CD8-positive, alpha-beta T cell (primary cell): ENCODE measurements at regions of chr5 and their contacts with region 1.

Region 1: GRCh38 chr5:109688971-109689739 is 572 bp upstream of the MAN2A1 start:
- DNase-seq: peak; percentile 50 to 94 (median 74)
- ATAC-seq: peak; percentile 71
- H3K4me3 ChIP-seq: peak overlapping the region; percentile 81 to 93
- H3K4me3 Mint-ChIP-seq: peak overlapping the region; percentile 87
- H3K27ac ChIP-seq: peak overlapping the region; percentile 88 to 93
- H3K27ac Mint-ChIP-seq: peak overlapping the region; percentile 88
- H3K4me1 ChIP-seq: peaks cover 26% of the 10 kb centered on the region
- H3K4me1 Mint-ChIP-seq: peaks cover 32% of the 10 kb centered on the region
- H3K27me3 ChIP-seq: no peaks in the 10 kb centered on the region
- H3K27me3 Mint-ChIP-seq: no peaks in the 10 kb centered on the region
- CTCF ChIP-seq: no peak

Region 2: GRCh38 chr5:108748401-108749127 is 940.6 kb before region 1 on chr5:
- CTCF ChIA-PET with region 1: no interaction called
- POLR2A ChIA-PET with region 1: no interaction called
- intact Hi-C with region 1: loop called in 1 of 2 experiments (anchors 1 kb)
- DNase-seq: peak; percentile 95 to 99 (median 98)
- ATAC-seq: peak; percentile 90
- H3K4me3 ChIP-seq: peak overlapping the region; percentile 86 to 98
- H3K4me3 Mint-ChIP-seq: peak overlapping the region; percentile 87
- H3K27ac ChIP-seq: peak overlapping the region; percentile 82 to 88
- H3K27ac Mint-ChIP-seq: peak overlapping the region; percentile 96
- H3K4me1 ChIP-seq: no peaks in the 10 kb centered on the region
- H3K4me1 Mint-ChIP-seq: peaks cover 12% of the 10 kb centered on the region
- H3K27me3 ChIP-seq: no peaks in the 10 kb centered on the region
- H3K27me3 Mint-ChIP-seq: peaks cover 2% of the 10 kb centered on the region
- CTCF ChIP-seq: no peak

Region 3: GRCh38 chr5:109601736-109602135 is 87.4 kb before region 1 on chr5:
- CTCF ChIA-PET with region 1: no interaction called
- POLR2A ChIA-PET with region 1: no interaction called
- intact Hi-C with region 1: no loop called
- DNase-seq: no peak
- ATAC-seq: no peak
- H3K4me3 ChIP-seq: no peak overlapping the region
- H3K4me3 Mint-ChIP-seq: no peak overlapping the region
- H3K27ac ChIP-seq: no peak overlapping the region
- H3K27ac Mint-ChIP-seq: no peak overlapping the region
- H3K4me1 ChIP-seq: no peaks in the 10 kb centered on the region
- H3K4me1 Mint-ChIP-seq: no peaks in the 10 kb centered on the region
- H3K27me3 ChIP-seq: no peaks in the 10 kb centered on the region
- H3K27me3 Mint-ChIP-seq: peaks cover 12% of the 10 kb centered on the region
- CTCF ChIP-seq: no peak

Region 4: DNA sequence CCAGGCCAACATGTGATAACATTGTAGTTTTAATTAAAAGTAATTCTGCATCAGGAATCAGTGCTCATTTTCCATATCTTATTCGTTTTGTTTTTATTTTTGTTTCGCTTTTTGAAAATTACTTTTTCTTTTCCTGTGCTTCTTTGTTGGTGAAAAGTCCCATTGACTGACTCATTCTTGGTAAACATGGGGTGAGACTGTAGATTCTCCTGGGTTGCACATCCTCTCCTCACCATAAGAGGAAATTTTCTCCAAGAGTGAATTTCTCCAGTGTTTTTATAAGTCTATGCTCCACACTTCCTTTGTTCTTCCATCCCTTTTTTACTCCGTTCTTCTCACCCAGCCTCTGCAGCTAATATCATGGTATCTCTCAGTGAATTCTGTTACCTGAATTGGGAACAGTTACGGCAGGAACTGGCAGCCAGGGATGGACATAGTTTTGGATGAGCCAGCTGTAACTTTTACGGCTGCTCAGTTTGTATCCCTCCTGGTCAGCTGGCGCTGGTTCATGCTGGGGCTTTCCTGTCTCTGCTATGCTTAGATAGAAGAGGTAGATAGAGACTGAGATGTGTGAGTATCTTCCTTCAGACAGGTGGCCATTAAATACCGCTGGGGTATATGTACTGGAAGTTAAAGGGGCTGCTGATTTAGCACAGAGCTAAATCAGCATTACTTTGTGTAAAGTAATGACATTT is 80.6 kb after region 1 on chr5:
- CTCF ChIA-PET with region 1: interaction called, 5 read pairs
- POLR2A ChIA-PET with region 1: no interaction called
- intact Hi-C with region 1: loop called in 1 of 2 experiments (anchors 5 kb)
- DNase-seq: no peak
- ATAC-seq: no peak
- H3K4me3 ChIP-seq: no peak overlapping the region
- H3K4me3 Mint-ChIP-seq: no peak overlapping the region
- H3K27ac ChIP-seq: no peak overlapping the region
- H3K27ac Mint-ChIP-seq: no peak overlapping the region
- H3K4me1 ChIP-seq: no peaks in the 10 kb centered on the region
- H3K4me1 Mint-ChIP-seq: peaks cover 31% of the 10 kb centered on the region
- H3K27me3 ChIP-seq: no peaks in the 10 kb centered on the region
- H3K27me3 Mint-ChIP-seq: no peaks in the 10 kb centered on the region
- CTCF ChIP-seq: no peak

Region 5: DNA sequence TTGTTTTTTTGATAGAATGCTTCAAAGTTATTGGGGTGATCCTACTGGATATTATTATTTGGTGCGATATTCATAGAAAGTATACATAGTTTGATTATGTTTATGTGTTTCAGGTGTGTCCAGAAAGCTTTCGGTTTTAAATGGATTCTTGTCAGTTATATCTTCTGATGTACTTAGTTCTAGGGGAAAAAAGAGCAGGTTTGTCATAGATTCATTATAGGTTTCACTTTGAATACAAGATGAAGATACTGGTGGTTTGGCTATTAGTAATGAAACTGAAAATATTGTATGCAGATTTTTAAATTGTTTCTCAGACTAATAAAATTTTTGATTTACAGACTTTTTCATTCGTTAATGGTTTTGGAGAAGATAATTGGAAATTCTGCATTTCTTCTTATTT is 99.4 kb after region 1 on chr5:
- CTCF ChIA-PET with region 1: no interaction called
- POLR2A ChIA-PET with region 1: no interaction called
- intact Hi-C with region 1: no loop called
- DNase-seq: no peak
- ATAC-seq: no peak
- H3K4me3 ChIP-seq: no peak overlapping the region
- H3K4me3 Mint-ChIP-seq: no peak overlapping the region
- H3K27ac ChIP-seq: no peak overlapping the region
- H3K27ac Mint-ChIP-seq: no peak overlapping the region
- H3K4me1 ChIP-seq: no peaks in the 10 kb centered on the region
- H3K4me1 Mint-ChIP-seq: peaks cover 15% of the 10 kb centered on the region
- H3K27me3 ChIP-seq: no peaks in the 10 kb centered on the region
- H3K27me3 Mint-ChIP-seq: no peaks in the 10 kb centered on the region
- CTCF ChIP-seq: no peak

Region 6: DNA sequence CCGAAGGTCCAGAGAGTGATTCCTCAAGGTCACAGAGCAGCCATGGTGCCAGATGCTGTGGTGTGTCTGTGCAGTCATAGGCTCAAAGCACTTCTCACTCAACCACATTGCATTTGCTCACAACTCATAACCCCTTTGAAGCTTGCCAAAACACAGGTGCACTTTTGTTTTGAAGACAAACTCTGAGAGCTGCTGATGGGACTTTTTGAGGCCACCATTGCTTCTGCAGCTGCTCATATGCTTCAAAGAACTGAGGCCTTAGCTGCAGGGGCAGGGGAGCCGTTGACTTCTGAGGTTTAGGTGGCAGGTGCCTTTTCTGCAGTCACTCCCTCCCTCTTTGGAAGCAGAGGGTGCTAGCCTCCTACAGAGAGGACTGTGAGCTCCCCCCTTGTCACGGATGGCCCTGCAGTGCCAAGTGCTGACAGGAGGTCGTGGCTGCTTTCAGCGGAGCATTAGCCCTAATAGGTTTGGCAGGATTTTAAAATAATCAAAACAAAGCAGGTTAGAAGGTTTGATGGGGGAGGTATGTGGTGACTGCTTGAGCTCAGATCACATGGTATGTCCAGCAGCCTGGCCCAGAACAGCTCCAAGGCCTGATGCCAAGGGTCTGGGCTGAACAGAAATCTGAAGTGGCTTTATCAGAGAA is 232.7 kb after region 1 on chr5:
- CTCF ChIA-PET with region 1: interaction called, 11 read pairs
- POLR2A ChIA-PET with region 1: interaction called, 54 read pairs
- intact Hi-C with region 1: loop called (anchors 1 to 5 kb)
- DNase-seq: peak; percentile 37 to 91 (median 65)
- ATAC-seq: peak; percentile 83
- H3K4me3 ChIP-seq: peak overlapping the region in 1 of 2 experiments; percentile 19
- H3K4me3 Mint-ChIP-seq: peak overlapping the region; percentile 73
- H3K27ac ChIP-seq: peak overlapping the region; percentile 36 to 41
- H3K27ac Mint-ChIP-seq: peak overlapping the region; percentile 93
- H3K4me1 ChIP-seq: peaks cover 43% of the 10 kb centered on the region
- H3K4me1 Mint-ChIP-seq: peaks cover 63% of the 10 kb centered on the region
- H3K27me3 ChIP-seq: no peaks in the 10 kb centered on the region
- H3K27me3 Mint-ChIP-seq: no peaks in the 10 kb centered on the region
- CTCF ChIP-seq: no peak

Region 7: DNA sequence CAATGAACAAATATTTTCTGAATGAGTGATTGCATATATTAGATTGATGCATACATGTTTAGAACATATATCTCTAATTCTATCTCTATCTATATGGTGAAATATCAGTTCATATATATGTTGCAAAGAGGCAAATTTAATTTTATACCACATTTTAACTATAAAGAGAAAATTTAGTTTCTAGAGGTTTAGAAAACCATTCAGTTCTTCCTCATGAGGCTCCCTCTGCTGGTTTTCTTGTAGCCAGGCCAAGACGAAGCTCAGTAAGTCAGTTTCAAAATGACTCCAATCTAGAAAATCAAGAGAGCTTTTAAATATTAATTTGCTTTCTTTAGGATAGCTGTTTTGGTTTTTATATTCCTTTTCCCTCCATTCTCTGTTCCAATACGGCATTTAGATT is 725.2 kb after region 1 on chr5:
- CTCF ChIA-PET with region 1: no interaction called
- POLR2A ChIA-PET with region 1: no interaction called
- intact Hi-C with region 1: loop called in 1 of 2 experiments (anchors 2 kb)
- DNase-seq: peak in 2 of 9 experiments; percentile 12 to 13
- ATAC-seq: no peak
- H3K4me3 ChIP-seq: no peak overlapping the region
- H3K4me3 Mint-ChIP-seq: no peak overlapping the region
- H3K27ac ChIP-seq: no peak overlapping the region
- H3K27ac Mint-ChIP-seq: no peak overlapping the region
- H3K4me1 ChIP-seq: no peaks in the 10 kb centered on the region
- H3K4me1 Mint-ChIP-seq: peaks cover 4% of the 10 kb centered on the region
- H3K27me3 ChIP-seq: no peaks in the 10 kb centered on the region
- H3K27me3 Mint-ChIP-seq: no peaks in the 10 kb centered on the region
- CTCF ChIP-seq: peak; percentile 18

Region 8: DNA sequence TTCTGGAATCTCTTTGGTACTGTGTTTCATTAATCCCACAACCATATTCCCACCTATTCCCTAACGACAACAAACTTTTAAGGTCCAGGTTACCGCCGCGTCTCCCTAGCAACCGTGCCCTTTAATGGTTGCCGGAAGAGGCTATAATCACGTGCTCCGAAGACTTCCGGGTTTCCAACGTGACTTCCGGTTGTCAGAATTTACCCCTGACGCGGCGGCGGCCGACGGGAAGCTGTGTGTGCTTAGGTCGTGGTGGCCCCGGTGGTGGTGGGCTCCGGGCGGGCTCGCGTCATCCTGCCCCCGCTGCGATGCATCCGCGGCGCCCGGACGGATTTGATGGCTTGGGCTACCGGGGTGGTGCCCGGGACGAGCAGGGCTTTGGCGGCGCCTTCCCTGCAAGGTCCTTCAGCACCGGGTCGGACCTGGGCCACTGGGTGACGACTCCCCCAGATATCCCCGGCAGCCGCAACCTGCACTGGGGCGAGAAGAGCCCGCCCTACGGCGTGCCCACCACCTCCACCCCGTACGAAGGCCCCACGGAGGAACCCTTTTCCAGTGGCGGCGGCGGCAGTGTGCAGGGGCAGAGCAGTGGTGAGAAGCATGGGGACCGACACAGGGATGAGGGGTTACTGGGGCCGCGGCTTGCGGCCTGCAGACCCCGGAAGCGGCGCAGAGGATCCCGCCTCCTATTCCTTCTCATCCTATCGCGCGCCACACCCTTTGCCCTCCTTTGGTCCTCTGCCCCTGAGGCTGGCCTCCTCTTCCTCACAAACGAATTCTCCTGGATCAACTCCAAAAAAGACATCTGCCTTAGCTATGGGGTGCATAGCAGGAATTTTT is 1049.9 kb after region 1 on chr5 and contains the start of gene SLC25A46:
- CTCF ChIA-PET with region 1: no interaction called
- POLR2A ChIA-PET with region 1: interaction called, 3 read pairs
- intact Hi-C with region 1: loop called (anchors 1 to 5 kb)
- DNase-seq: peak; percentile 76 to 96 (median 88)
- ATAC-seq: peak; percentile 79
- H3K4me3 ChIP-seq: peak within 1 kb of the TSS; percentile 69 to 91
- H3K4me3 Mint-ChIP-seq: peak within 1 kb of the TSS; percentile 96
- H3K27ac ChIP-seq: peak within 1 kb of the TSS; percentile 88 to 97
- H3K27ac Mint-ChIP-seq: peak within 1 kb of the TSS; percentile 97
- H3K4me1 ChIP-seq: peaks cover 15% of the 10 kb centered on the region
- H3K4me1 Mint-ChIP-seq: peaks cover 34% of the 10 kb centered on the region
- H3K27me3 ChIP-seq: no peaks in the 10 kb centered on the region
- H3K27me3 Mint-ChIP-seq: no peaks in the 10 kb centered on the region
- CTCF ChIP-seq: no peak
- total RNA-seq, gene SLC25A46: 13.6 to 14.6 TPM

Region 9: DNA sequence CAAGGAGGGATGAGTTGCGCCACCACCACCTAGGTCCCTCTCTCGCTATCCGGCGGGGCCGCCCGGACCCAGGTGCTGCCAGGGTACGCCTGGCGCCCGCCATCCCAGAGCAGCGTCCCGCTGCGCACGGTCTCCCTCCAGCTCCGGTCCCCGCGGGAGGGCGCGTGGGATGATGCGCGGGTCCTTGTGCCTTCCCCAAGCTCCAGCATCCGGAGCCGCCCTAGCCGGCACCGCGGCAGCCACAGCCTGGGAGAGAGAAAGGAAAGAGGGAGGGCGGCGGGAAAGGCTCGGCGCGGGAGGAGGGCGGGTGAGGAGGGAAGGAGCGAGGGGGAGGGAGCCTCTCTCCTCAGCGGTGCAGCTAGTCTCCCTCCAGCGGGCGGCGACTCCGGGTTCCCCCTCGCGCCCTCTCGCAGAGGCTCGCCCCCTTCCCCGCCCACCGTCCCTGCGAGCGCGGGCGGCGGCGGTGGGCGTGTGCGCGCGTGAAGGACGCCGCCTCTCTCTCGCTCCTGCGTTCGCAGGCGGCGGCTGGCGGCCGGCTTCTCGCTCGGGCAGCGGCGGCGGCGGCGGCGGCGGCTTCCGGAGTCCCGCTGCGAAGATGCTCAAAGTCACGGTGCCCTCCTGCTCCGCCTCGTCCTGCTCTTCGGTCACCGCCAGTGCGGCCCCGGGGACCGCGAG is 1534.9 kb after region 1 on chr5 and contains the start of gene CAMK4:
- CTCF ChIA-PET with region 1: no interaction called
- POLR2A ChIA-PET with region 1: no interaction called
- intact Hi-C with region 1: loop called in 1 of 2 experiments (anchors 10 kb)
- DNase-seq: peak; percentile 70 to 94 (median 84)
- ATAC-seq: peak; percentile 88
- H3K4me3 ChIP-seq: peak within 1 kb of the TSS; percentile 90 to 95
- H3K4me3 Mint-ChIP-seq: peak within 1 kb of the TSS; percentile 96
- H3K27ac ChIP-seq: peak within 1 kb of the TSS; percentile 72 to 75
- H3K27ac Mint-ChIP-seq: peak within 1 kb of the TSS; percentile 99
- H3K4me1 ChIP-seq: peaks cover 24% of the 10 kb centered on the region
- H3K4me1 Mint-ChIP-seq: peaks cover 33% of the 10 kb centered on the region
- H3K27me3 ChIP-seq: no peaks in the 10 kb centered on the region
- H3K27me3 Mint-ChIP-seq: no peaks in the 10 kb centered on the region
- CTCF ChIP-seq: peak; percentile 46
- total RNA-seq, gene CAMK4: 165 to 168 TPM